H1 (cell line): ENCODE measurements at regions of chr12 and their contacts with region 1.

Region 1: GRCh38 chr12:49842519-49843352 is at the start of gene BCDIN3D:
- DNase-seq: peak in 1 of 2 experiments; percentile 83
- H3K4me3 ChIP-seq: peak within 1 kb of the TSS; percentile 63 to 90 (median 84)
- H3K27ac ChIP-seq: peak within 1 kb of the TSS; percentile 62
- H3K4me1 ChIP-seq: peaks cover 2 to 5% (median 4%) of the 10 kb centered on the region in 4 experiments; a peak in 4 of 7 replicates
- H3K27me3 ChIP-seq: no peaks in the 10 kb centered on the region
- CTCF ChIP-seq: no peak
- EP300 ChIP-seq: no peak
- POLR2A ChIP-seq: peak in 1 of 2 experiments; percentile 80; a peak in 2 of 3 replicates
- RAD21 ChIP-seq: no peak
- total RNA-seq, gene BCDIN3D: 2.4 and 2.5 TPM in 2 replicates

Region 2: DNA sequence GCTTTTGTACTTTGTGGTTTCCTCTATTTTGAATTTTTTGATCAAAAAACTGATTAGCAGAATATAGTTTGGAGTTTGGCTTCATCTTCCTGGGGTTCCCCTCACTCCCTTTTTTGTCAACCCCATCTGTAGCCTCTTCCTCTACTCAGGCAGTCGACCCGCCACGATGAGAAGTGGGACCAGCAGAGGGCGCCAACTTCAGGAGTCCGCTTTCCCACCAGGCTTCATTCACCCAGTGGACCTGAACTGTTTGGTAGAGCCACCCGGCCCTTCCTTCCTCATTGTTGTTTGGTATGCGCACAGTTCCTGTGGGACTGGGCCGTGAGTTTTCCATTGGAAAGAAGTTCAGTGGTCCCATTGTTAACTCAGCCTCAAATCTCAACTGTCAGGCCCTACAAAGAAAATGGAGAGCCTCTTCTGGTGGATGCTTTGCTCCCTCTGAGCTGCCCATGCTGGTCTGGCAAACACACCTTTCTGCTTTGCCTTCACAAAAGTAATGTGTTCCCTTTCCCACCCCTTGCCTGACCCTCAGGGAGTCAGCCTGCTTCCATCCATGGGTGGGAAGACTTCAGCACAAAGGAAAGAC is 79.6 kb before region 1 on chr12:
- CTCF ChIA-PET with region 1: interaction called, 119 read pairs
- POLR2A ChIA-PET with region 1: no interaction called
- DNase-seq: peak; percentile 38 to 92
- H3K4me3 ChIP-seq: no peak overlapping the region
- H3K27ac ChIP-seq: no peak overlapping the region
- H3K4me1 ChIP-seq: peaks cover 0 to 4% (median 0%) of the 10 kb centered on the region in 4 experiments; a peak in 1 of 7 replicates
- H3K27me3 ChIP-seq: no peaks in the 10 kb centered on the region
- CTCF ChIP-seq: peak; percentile 83 to 89 (median 87)
- EP300 ChIP-seq: no peak
- POLR2A ChIP-seq: no peak
- RAD21 ChIP-seq: peak; percentile 50 to 54; a peak in 3 of 4 replicates

Region 3: GRCh38 chr12:49800421-49801140 is 42.2 kb before region 1 on chr12:
- CTCF ChIA-PET with region 1: interaction called, 40 read pairs
- POLR2A ChIA-PET with region 1: no interaction called
- DNase-seq: no peak
- H3K4me3 ChIP-seq: no peak overlapping the region
- H3K27ac ChIP-seq: no peak overlapping the region
- H3K4me1 ChIP-seq: no peaks in the 10 kb centered on the region
- H3K27me3 ChIP-seq: no peaks in the 10 kb centered on the region
- CTCF ChIP-seq: no peak
- EP300 ChIP-seq: no peak
- POLR2A ChIP-seq: no peak
- RAD21 ChIP-seq: no peak

Region 4: GRCh38 chr12:49821373-49822287 is 21.1 kb before region 1 on chr12:
- CTCF ChIA-PET with region 1: interaction called, 29 read pairs
- POLR2A ChIA-PET with region 1: interaction called, 10 read pairs
- DNase-seq: no peak
- H3K4me3 ChIP-seq: no peak overlapping the region
- H3K27ac ChIP-seq: no peak overlapping the region
- H3K4me1 ChIP-seq: peaks cover 5 to 25% (median 15%) of the 10 kb centered on the region in 4 experiments
- H3K27me3 ChIP-seq: no peaks in the 10 kb centered on the region
- CTCF ChIP-seq: peak in 1 of 3 experiments; percentile 2; a peak in 1 of 4 replicates
- EP300 ChIP-seq: no peak
- POLR2A ChIP-seq: no peak
- RAD21 ChIP-seq: no peak